Motor neuron (in vitro differentiated cells): ENCODE measurements at regions of chr10 and their contacts with region 1.

Region 1: DNA sequence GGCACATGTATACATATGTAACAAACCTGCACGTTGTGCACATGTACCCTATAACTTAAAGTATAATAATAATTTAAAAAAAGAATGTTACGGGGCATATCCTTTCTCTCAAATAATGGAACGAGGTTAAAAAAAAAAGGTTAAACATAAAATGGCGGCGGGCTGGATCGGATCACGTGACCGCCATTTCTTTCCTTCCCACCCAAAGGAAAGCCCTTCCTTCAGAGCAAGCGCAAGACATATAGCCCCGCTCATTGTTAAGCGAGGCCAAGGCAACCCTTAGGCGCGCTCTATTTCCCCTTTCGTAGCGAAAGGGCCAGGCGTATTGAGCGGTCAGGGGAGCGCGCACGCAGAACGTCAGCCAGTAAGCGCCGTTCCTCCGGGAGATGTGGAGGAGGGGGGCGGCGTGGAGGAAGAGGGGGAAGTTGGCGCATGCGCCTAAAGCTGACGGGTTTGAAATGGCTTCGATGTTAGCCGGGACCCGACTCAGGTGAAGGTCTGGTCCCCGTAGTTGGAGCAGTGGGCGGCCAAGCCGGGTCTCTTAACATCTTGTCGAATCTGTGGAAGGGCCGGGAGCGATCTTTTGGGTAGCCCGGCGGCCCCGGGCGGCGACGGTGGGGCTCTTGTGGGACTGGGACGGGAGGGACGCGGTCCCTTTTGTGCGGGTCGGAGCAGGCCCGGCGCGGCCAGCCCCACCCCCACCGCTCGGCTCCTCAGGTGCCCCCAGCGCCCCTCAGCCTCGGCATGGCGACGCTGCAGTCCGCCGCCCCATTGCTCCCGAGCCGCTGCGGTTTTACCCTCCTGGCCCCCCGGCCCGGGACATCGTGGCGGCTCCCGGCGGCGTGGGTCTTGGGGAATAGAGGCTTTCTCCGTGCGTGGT is at the start of gene CCAR1:
- ATAC-seq: peak; percentile 97 to 99 (median 98)
- H3K4me3 ChIP-seq: peak within 1 kb of the TSS; percentile 81 to 96 (median 90)
- H3K27ac ChIP-seq: peak within 1 kb of the TSS; percentile 96 to 97
- H3K4me1 ChIP-seq: peaks cover 2 to 4% of the 10 kb centered on the region in 2 donors
- total RNA-seq, gene CCAR1: 37.1 to 93.8 (median 48.5) TPM

Region 2: GRCh38 chr10:68550747-68551411 is 170.2 kb before region 1 on chr10:
- in situ Hi-C with region 1: loop called in 1 of 9 experiments (anchors 25 kb)
- ATAC-seq: peak; percentile 43 to 86 (median 72)
- H3K4me3 ChIP-seq: no peak overlapping the region
- H3K27ac ChIP-seq: no peak overlapping the region
- H3K4me1 ChIP-seq: no peaks in the 10 kb centered on the region